Activated naive CD4-positive, alpha-beta T cell treated with anti-CD3 and anti-CD28 coated beads for 36 hours (primary cell): ENCODE measurements at regions of chr3 and their contacts with region 1.

Region 1: DNA sequence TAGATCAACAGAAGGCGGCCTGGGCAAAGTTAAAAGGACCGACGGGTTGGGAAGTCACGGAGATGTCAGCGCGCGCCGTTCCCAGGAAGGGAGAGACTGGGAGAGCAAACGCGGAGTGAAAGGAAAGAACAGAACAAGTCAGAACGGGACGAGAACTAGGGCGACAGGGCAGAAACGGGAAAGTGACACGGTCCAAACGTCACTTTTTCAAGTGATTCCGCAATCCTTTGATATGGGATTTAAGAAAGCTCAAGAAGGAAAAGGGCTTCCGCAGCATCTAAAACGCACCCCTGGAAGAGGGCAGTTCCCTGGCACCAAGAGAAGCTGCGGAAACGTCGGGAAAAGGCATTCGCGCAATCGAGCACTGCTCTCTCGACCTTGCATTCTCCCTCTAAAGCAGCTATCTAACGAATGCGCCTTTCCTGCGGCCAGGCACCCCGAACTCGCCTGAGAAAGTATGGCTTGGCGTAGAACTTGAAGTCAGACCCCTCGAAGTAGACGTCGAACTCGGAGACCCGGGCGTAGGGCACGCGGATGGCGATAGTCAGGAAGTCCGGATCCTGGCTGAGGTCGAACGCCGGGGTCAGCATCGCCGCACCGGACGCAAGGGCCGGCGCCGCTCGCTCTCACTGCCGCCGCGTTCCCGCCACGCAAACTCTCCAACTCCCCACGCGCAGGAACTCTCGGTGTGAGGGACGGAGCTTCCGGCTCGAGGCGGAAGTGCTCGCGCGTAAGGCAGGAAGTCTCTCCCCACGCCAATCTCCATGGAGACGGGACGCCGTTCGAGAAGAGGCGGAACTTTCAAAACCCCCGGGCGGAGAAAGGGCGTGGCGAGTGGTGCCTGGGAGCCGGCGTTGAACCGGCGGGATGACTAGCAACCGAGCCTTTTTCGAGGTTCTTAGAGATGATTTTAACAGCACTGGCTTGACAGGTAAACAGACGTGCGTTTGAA is at the start of gene SHQ1:
- DNase-seq: peak; percentile 98
- H3K4me3 Mint-ChIP-seq: peak within 1 kb of the TSS; percentile 97
- H3K27ac Mint-ChIP-seq: peak within 1 kb of the TSS; percentile 57
- H3K4me1 Mint-ChIP-seq: peaks cover 47% of the 10 kb centered on the region
- H3K27me3 Mint-ChIP-seq: no peaks in the 10 kb centered on the region
- total RNA-seq, gene SHQ1: 19.9 to 20.5 TPM

Region 2: DNA sequence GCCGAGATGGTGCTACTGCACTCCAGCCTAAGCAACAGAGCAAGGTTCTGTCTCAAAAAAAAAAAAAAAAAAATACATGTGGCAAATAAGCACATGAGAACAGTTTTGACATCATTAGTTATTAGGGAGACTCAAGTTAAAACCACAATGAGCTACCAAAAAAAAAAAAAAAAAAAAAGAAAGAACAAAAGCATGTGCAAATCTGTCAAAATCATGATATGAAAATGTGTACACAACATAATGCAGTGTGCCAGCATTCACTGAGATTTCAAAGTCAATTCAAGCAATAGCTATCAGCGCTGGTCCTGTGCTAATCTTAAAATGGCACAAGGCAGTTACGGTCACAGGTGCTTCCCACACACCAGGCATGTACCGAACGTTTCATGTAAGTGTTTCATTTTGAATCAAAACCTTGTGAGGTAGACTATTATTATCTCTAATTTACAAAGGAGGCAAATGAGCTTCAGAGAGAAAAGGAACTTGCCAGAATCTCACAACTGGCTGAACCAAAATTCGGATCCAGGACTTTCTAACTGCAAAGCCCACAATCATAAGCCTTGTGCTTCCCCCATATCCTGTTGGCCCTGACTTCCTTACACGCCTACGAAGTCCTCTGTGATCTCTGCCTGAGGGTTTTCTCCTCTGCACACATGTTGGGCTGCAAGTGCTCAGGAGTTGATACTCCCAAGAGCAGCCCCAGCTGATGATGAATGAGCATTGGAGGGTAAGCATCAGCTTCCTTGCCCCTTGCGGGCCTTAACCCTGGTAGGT is 863.0 kb before region 1 on chr3:
- CTCF ChIA-PET with region 1: no interaction called
- intact Hi-C with region 1: loop called (anchors 2 kb)
- DNase-seq: peak; percentile 76
- H3K4me3 Mint-ChIP-seq: peak overlapping the region; percentile 48
- H3K27ac Mint-ChIP-seq: peak overlapping the region; percentile 84
- H3K4me1 Mint-ChIP-seq: peaks cover 43% of the 10 kb centered on the region
- H3K27me3 Mint-ChIP-seq: peaks cover 6% of the 10 kb centered on the region

Region 3: DNA sequence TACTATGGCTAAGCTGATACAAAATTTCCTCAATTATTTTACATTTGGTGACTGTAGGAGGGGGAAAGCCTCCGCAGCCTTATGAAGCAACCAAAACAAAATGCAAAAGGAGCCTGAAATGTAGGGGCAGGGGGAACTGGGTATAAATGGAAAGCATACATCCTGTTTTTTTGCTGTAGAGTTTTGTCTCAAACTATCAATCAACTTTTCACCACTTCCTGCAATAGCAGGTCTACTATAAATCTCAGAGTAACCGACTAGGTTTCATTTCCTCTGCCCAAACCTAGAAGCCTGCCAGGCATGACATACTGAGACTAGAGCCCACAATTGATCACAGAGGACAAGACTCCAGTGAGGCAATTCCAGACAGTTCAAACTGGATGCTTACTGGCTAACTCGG is 91.1 kb before region 1 on chr3:
- CTCF ChIA-PET with region 1: no interaction called
- intact Hi-C with region 1: loop called (anchors 1 kb)
- DNase-seq: peak; percentile 73
- H3K4me3 Mint-ChIP-seq: peak overlapping the region; percentile 17
- H3K27ac Mint-ChIP-seq: peak overlapping the region; percentile 83
- H3K4me1 Mint-ChIP-seq: peaks cover 74% of the 10 kb centered on the region
- H3K27me3 Mint-ChIP-seq: no peaks in the 10 kb centered on the region

Region 4: DNA sequence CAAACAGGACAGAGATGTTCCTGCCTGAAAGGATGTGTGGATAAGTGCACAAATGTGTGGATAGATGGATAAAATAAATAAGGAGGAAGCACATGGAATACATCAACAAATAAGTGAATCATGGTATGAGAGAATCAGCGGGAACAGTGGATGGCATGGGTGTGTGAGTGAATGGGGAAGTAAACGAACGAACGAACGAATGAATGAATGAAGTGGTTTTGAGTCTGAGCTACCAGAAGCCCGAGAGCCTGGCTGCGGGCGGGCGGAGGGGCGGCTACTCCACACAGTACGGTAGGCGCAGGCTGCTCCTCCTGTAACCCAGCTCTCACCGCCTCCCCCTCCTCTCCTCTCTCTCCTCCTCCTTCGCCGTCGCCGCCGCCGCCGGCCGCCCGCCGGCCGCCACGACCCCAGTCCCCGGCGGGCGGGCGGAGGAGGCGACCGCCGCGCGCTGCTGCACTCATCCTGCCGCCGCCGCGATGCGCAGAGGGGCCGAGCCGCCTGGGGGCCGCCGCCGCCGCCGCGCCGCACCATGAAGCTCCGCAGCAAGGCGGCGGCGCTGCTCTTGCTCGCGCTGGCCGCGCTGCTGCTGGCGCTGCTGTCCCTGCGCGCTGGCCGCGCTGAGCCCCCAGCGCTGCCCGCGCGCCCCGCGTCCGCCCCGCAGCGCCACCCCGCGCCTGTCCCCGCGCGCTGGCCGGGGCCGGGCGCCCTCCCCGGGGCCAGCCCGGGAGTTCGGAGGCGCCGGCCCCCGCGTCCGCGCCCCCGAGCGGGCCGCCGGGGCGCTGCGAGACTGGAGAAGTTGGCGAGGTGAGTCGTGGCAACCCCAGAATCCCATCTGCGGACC is 39.9 kb after region 1 on chr3 and contains the start of gene GXYLT2:
- CTCF ChIA-PET with region 1: interaction called, 10 read pairs
- intact Hi-C with region 1: loop called (anchors 1 kb)
- DNase-seq: peak; percentile 38
- H3K4me3 Mint-ChIP-seq: peak within 1 kb of the TSS; percentile 80
- H3K27ac Mint-ChIP-seq: no peak within 1 kb of the TSS
- H3K4me1 Mint-ChIP-seq: peaks cover 22% of the 10 kb centered on the region
- H3K27me3 Mint-ChIP-seq: peaks cover 80% of the 10 kb centered on the region
- total RNA-seq, gene GXYLT2: not detected

Region 5: GRCh38 chr3:73045391-73045790 is 197.4 kb after region 1 on chr3:
- CTCF ChIA-PET with region 1: no interaction called
- intact Hi-C with region 1: no loop called
- DNase-seq: no peak
- H3K4me3 Mint-ChIP-seq: no peak overlapping the region
- H3K27ac Mint-ChIP-seq: no peak overlapping the region
- H3K4me1 Mint-ChIP-seq: peaks cover 54% of the 10 kb centered on the region
- H3K27me3 Mint-ChIP-seq: no peaks in the 10 kb centered on the region

Region 6: GRCh38 chr3:73086071-73086494 is 238.1 kb after region 1 on chr3:
- CTCF ChIA-PET with region 1: interaction called, 23 read pairs
- intact Hi-C with region 1: loop called (anchors 1 kb)
- DNase-seq: peak; percentile 69
- H3K4me3 Mint-ChIP-seq: no peak overlapping the region
- H3K27ac Mint-ChIP-seq: no peak overlapping the region
- H3K4me1 Mint-ChIP-seq: peaks cover 8% of the 10 kb centered on the region
- H3K27me3 Mint-ChIP-seq: no peaks in the 10 kb centered on the region